ENCODE measurements at regions of chr1 and their contacts with region 1.

Region 1: GRCh38 chr1:6199298-6200187 is at the start of gene RPL22:
- DNase-seq: peak; percentile 93 to 99 (median 96)
- ATAC-seq: peak; percentile 96
- H3K4me3 ChIP-seq: peak within 1 kb of the TSS; percentile 97
- H3K4me3 Mint-ChIP-seq: peak within 1 kb of the TSS; percentile 91
- H3K27ac ChIP-seq: peak within 1 kb of the TSS; percentile 63 to 69
- H3K27ac Mint-ChIP-seq: peak within 1 kb of the TSS; percentile 84
- H3K4me1 ChIP-seq: peaks cover 35% of the 10 kb centered on the region
- H3K4me1 Mint-ChIP-seq: peaks cover 47% of the 10 kb centered on the region
- H3K27me3 ChIP-seq: no peaks in the 10 kb centered on the region
- H3K27me3 Mint-ChIP-seq: no peaks in the 10 kb centered on the region
- CTCF ChIP-seq: no peak
- total RNA-seq, gene RPL22: 620 to 652 TPM

Region 2: GRCh38 chr1:5992026-5992813 is 207.3 kb before region 1 on chr1 and contains the start of gene NPHP4:
- CTCF ChIA-PET with region 1: no interaction called
- POLR2A ChIA-PET with region 1: interaction called, 8 read pairs
- intact Hi-C with region 1: loop called (anchors 1 kb)
- DNase-seq: peak; percentile 97 to 100 (median 99)
- ATAC-seq: peak; percentile 89
- H3K4me3 ChIP-seq: peak within 1 kb of the TSS; percentile 76
- H3K4me3 Mint-ChIP-seq: peak within 1 kb of the TSS; percentile 95
- H3K27ac ChIP-seq: peak within 1 kb of the TSS; percentile 73 to 92
- H3K27ac Mint-ChIP-seq: peak within 1 kb of the TSS; percentile 94
- H3K4me1 ChIP-seq: peaks cover 46% of the 10 kb centered on the region
- H3K4me1 Mint-ChIP-seq: peaks cover 34% of the 10 kb centered on the region
- H3K27me3 ChIP-seq: no peaks in the 10 kb centered on the region
- H3K27me3 Mint-ChIP-seq: no peaks in the 10 kb centered on the region
- CTCF ChIP-seq: no peak
- total RNA-seq, gene NPHP4: 6.2 to 7.7 TPM

Region 3: DNA sequence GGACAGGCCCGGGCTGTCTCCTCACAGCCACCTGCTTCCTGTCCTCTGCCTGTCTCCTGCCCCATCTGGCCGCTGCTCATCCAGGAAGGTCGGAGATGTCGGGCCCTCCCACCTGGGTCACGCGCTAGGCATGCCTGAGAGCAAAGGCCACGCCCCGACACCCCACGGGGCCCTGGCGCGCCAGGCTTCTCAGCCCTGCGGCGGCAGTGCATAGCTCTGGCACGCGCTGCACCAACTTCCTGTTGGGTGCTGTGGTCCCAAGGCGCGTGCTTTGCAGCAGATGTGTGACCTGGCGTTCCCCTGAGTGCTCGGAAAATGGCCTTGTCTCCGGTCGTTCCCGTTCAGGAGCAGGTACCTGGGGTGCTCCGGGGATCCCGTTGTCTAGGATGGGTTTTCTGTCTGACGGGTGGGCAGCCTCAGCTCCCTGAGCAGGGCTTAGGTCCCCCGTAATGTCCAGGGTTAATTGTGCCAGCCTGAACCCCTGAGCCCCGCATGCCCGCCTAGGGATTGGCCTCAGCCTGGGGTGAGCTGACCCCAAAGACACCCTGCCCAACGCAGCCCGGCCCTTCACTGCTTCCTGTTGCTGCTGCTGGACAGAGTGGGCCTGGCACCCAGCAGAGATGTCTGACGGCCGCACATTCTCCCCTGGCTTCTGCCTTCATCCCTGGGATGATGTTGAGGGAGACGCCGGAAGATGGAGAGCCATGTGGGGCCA is 173.3 kb before region 1 on chr1:
- CTCF ChIA-PET with region 1: interaction called, 3 read pairs
- POLR2A ChIA-PET with region 1: no interaction called
- intact Hi-C with region 1: loop called in 1 of 2 experiments (anchors 10 kb)
- DNase-seq: peak; percentile 82 to 98 (median 93)
- ATAC-seq: peak; percentile 81
- H3K4me3 ChIP-seq: peak overlapping the region; percentile 68
- H3K4me3 Mint-ChIP-seq: peak overlapping the region; percentile 83
- H3K27ac ChIP-seq: peak overlapping the region; percentile 86 to 95
- H3K27ac Mint-ChIP-seq: peak overlapping the region; percentile 92
- H3K4me1 ChIP-seq: peaks cover 62% of the 10 kb centered on the region
- H3K4me1 Mint-ChIP-seq: peaks cover 47% of the 10 kb centered on the region
- H3K27me3 ChIP-seq: no peaks in the 10 kb centered on the region
- H3K27me3 Mint-ChIP-seq: no peaks in the 10 kb centered on the region
- CTCF ChIP-seq: no peak

Region 4: GRCh38 chr1:6235296-6235677 is 35.7 kb after region 1 on chr1:
- CTCF ChIA-PET with region 1: no interaction called
- POLR2A ChIA-PET with region 1: interaction called, 5 read pairs
- intact Hi-C with region 1: loop called (anchors 1 kb)
- DNase-seq: peak in 3 of 14 experiments; percentile 30 to 49 (median 35)
- ATAC-seq: peak; percentile 17
- H3K4me3 ChIP-seq: peak overlapping the region; percentile 81
- H3K4me3 Mint-ChIP-seq: peak overlapping the region; percentile 94
- H3K27ac ChIP-seq: no peak overlapping the region
- H3K27ac Mint-ChIP-seq: peak overlapping the region; percentile 64
- H3K4me1 ChIP-seq: peaks cover 18% of the 10 kb centered on the region
- H3K4me1 Mint-ChIP-seq: peaks cover 15% of the 10 kb centered on the region
- H3K27me3 ChIP-seq: peaks cover 5% of the 10 kb centered on the region in 2 experiments
- H3K27me3 Mint-ChIP-seq: peaks cover 13% of the 10 kb centered on the region
- CTCF ChIP-seq: no peak

Region 5: GRCh38 chr1:6701437-6702153 is 502.1 kb after region 1 on chr1 and contains the start of gene DNAJC11:
- CTCF ChIA-PET with region 1: no interaction called
- POLR2A ChIA-PET with region 1: no interaction called
- intact Hi-C with region 1: loop called in 1 of 2 experiments (anchors 10 kb)
- DNase-seq: peak; percentile 80 to 95 (median 88)
- ATAC-seq: peak; percentile 98
- H3K4me3 ChIP-seq: peak within 1 kb of the TSS; percentile 86
- H3K4me3 Mint-ChIP-seq: peak within 1 kb of the TSS; percentile 96
- H3K27ac ChIP-seq: peak within 1 kb of the TSS in 1 of 2 donors; percentile 60
- H3K27ac Mint-ChIP-seq: peak within 1 kb of the TSS; percentile 76
- H3K4me1 ChIP-seq: peaks cover 18% of the 10 kb centered on the region
- H3K4me1 Mint-ChIP-seq: peaks cover 43% of the 10 kb centered on the region
- H3K27me3 ChIP-seq: no peaks in the 10 kb centered on the region
- H3K27me3 Mint-ChIP-seq: no peaks in the 10 kb centered on the region
- CTCF ChIP-seq: peak; percentile 55
- total RNA-seq, gene DNAJC11: 20.6 to 24.0 TPM

Measured in CD4-positive, alpha-beta T cell (primary cell).